Ascending aorta (tissue), 2 donors: ENCODE measurements at regions of chr14 and their contacts with region 1.

Region 1: GRCh38 chr14:54175298-54175942 is 218.8 kb upstream of the BMP4 start:
- DNase-seq: peak in 1 of 2 donors; percentile 80
- H3K4me3 ChIP-seq: no peak overlapping the region
- H3K27ac ChIP-seq: peak overlapping the region in 1 of 2 donors; percentile 56
- H3K4me1 ChIP-seq: peaks cover 0 to 30% of the 10 kb centered on the region in 2 donors
- H3K27me3 ChIP-seq: no peaks in the 10 kb centered on the region
- CTCF ChIP-seq: peak; percentile 57 to 86 (median 81)

Region 2: GRCh38 chr14:53539489-53540126 is 635.8 kb before region 1 on chr14:
- intact Hi-C with region 1: loop called (anchors 2 kb)
- DNase-seq: peak in 1 of 2 donors; percentile 82
- H3K4me3 ChIP-seq: no peak overlapping the region
- H3K27ac ChIP-seq: no peak overlapping the region
- H3K4me1 ChIP-seq: no peaks in the 10 kb centered on the region
- H3K27me3 ChIP-seq: no peaks in the 10 kb centered on the region
- CTCF ChIP-seq: peak; percentile 68 to 80 (median 79)

Region 3: GRCh38 chr14:54085232-54085761 is 90.1 kb before region 1 on chr14:
- intact Hi-C with region 1: loop called (anchors 2 kb)
- DNase-seq: no peak
- H3K4me3 ChIP-seq: no peak overlapping the region
- H3K27ac ChIP-seq: no peak overlapping the region
- H3K4me1 ChIP-seq: no peaks in the 10 kb centered on the region
- H3K27me3 ChIP-seq: no peaks in the 10 kb centered on the region
- CTCF ChIP-seq: no peak

Region 4: GRCh38 chr14:54108481-54109471 is 66.6 kb before region 1 on chr14:
- intact Hi-C with region 1: loop called (anchors 2 kb)
- DNase-seq: no peak
- H3K4me3 ChIP-seq: no peak overlapping the region
- H3K27ac ChIP-seq: peak overlapping the region; percentile 39 to 68
- H3K4me1 ChIP-seq: peaks cover 8 to 27% of the 10 kb centered on the region in 2 donors
- H3K27me3 ChIP-seq: no peaks in the 10 kb centered on the region
- CTCF ChIP-seq: no peak

Region 5: GRCh38 chr14:54347997-54348611 is 172.7 kb after region 1 on chr14:
- intact Hi-C with region 1: loop called (anchors 5 kb)
- DNase-seq: no peak
- H3K4me3 ChIP-seq: no peak overlapping the region
- H3K27ac ChIP-seq: no peak overlapping the region
- H3K4me1 ChIP-seq: no peaks in the 10 kb centered on the region
- H3K27me3 ChIP-seq: no peaks in the 10 kb centered on the region
- CTCF ChIP-seq: peak; percentile 44 to 75 (median 66)